ENCODE measurements at regions of chr9 and their contacts with region 1.

Region 1: GRCh38 chr9:75826314-75826713 is 64.2 kb upstream of the PCSK5 start:
- DNase-seq: no peak
- H3K4me3 ChIP-seq: no peak overlapping the region
- CTCF ChIP-seq: no peak

Region 2: DNA sequence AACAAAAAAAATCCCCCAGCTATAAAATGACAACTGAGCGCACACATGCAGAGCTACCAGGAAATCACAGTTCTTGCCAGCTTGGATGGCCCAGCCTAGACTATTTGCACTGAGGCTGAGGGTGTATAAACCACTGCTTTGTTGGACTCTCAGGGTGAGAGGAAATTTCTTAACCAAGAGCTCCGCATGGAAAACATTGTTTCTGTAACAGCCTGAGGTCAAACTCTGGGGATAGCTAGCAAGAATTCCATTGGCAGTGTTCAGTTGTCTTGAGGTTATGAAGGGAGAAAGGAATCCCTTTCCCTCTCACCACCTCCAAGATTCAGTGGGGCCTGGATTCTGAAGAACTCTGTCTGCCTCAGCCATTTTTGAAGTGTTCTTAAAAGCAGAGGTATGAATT is 378.0 kb before region 1 on chr9:
- in situ Hi-C with region 1: loop called (anchors 25 kb)
- DNase-seq: peak; percentile 60
- H3K4me3 ChIP-seq: no peak overlapping the region
- CTCF ChIP-seq: no peak

Region 3: DNA sequence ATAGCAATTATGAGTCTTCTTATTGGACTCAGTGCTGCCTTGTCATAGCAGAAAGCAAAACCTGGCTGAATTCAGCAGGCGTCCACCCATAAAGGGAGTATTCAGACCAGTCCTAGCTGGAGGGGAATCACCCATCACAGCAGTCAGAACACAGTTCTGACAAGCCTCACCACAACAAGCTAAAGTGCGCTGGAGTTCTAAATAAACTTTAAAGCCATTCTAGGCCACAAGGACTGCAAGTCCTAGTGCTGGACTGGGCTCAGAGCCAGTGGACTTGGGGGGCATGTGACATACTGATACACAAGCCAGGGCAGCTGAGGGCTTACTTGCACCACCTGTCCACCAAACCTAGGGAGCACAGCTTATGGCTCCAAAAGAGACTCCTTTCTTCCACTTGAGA is 51.1 kb before region 1 on chr9:
- in situ Hi-C with region 1: no loop called
- DNase-seq: no peak
- H3K4me3 ChIP-seq: no peak overlapping the region
- CTCF ChIP-seq: no peak